Endothelial cell of umbilical vein (primary cell): ENCODE measurements at regions of chr10 and their contacts with region 1.

Region 1: DNA sequence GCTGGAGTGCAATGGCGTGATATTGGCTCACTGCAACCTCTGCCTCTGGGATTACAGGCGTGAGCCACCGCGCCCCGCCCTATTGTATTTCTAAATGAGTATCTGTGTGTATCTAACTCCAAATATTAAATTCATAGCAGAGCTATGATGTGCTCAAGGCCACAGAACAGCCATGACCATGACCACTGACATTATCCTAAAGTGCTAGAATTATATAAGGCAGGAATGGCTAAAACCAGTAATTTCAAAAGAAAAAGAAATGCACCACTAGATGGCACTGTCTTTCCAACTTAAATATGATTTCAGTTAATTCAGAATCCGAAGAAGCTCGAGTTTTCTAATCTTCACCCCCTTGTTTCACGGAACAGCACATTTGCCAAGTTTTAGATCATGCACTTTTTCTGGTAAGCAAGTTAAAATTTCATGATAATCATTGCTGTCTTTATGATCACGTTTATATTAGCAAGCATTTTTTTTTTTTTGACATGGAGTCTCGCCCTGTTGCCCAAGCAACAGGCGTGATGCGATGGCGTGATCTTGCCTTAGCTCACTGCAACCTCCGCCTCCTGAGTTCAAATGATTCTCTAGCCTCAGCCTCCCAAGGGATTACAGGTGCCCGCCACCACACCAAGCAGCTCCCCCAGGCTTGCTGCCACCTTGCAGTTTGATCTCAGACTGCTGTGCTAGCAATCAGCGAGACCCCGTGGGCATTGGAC is 65.3 kb downstream of the OR13A1 start:
- DNase-seq: peak; percentile 71
- H3K4me3 ChIP-seq: peak overlapping the region in 2 of 3 experiments; percentile 21 to 58
- H3K27ac ChIP-seq: peak overlapping the region; percentile 23
- H3K4me1 ChIP-seq: no peaks in the 10 kb centered on the region
- H3K27me3 ChIP-seq: peaks cover 0 to 3% of the 10 kb centered on the region in 2 experiments
- CTCF ChIP-seq: peak; percentile 11 to 28
- POLR2A ChIP-seq: no peak

Region 2: DNA sequence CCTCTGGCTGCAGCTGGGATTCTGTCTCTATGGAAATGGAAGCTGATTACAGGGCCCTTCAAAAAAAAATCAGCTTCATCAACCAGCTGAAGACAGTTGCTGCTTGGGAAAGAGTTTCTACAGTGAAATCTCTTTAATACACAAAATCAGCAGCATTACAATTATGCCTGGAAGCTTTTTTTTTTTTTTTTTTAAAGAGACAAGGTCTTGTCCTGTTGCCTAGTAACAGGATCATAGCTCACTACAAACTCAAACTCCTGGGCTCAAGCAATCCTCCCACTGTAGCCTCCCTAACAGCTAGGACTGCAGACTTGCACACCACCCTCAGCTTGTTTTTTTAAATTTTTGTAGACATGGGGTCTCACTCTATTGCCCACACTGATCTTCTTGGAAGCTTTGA is 29.2 kb before region 1 on chr10:
- CTCF ChIA-PET with region 1: interaction called, 11 read pairs
- POLR2A ChIA-PET with region 1: no interaction called
- dilution Hi-C with region 1: no loop called
- intact Hi-C with region 1: no loop called
- DNase-seq: no peak
- H3K4me3 ChIP-seq: no peak overlapping the region
- H3K27ac ChIP-seq: no peak overlapping the region
- H3K4me1 ChIP-seq: no peaks in the 10 kb centered on the region
- H3K27me3 ChIP-seq: no peaks in the 10 kb centered on the region
- CTCF ChIP-seq: no peak
- POLR2A ChIP-seq: no peak

Region 3: GRCh38 chr10:45229823-45230222 is 20.3 kb before region 1 on chr10:
- CTCF ChIA-PET with region 1: interaction called, 70 read pairs
- POLR2A ChIA-PET with region 1: no interaction called
- dilution Hi-C with region 1: no loop called
- intact Hi-C with region 1: loop called (anchors 1 kb)
- DNase-seq: no peak
- H3K4me3 ChIP-seq: no peak overlapping the region
- H3K27ac ChIP-seq: no peak overlapping the region
- H3K4me1 ChIP-seq: no peaks in the 10 kb centered on the region
- H3K27me3 ChIP-seq: no peaks in the 10 kb centered on the region
- CTCF ChIP-seq: no peak
- POLR2A ChIP-seq: no peak

Region 4: GRCh38 chr10:45261946-45262345 is 11.8 kb after region 1 on chr10:
- CTCF ChIA-PET with region 1: interaction called, 11 read pairs
- POLR2A ChIA-PET with region 1: no interaction called
- dilution Hi-C with region 1: no loop called
- intact Hi-C with region 1: no loop called
- DNase-seq: no peak
- H3K4me3 ChIP-seq: no peak overlapping the region
- H3K27ac ChIP-seq: no peak overlapping the region
- H3K4me1 ChIP-seq: no peaks in the 10 kb centered on the region
- H3K27me3 ChIP-seq: peaks cover 5% of the 10 kb centered on the region in 2 experiments
- CTCF ChIP-seq: no peak
- POLR2A ChIP-seq: no peak

Region 5: DNA sequence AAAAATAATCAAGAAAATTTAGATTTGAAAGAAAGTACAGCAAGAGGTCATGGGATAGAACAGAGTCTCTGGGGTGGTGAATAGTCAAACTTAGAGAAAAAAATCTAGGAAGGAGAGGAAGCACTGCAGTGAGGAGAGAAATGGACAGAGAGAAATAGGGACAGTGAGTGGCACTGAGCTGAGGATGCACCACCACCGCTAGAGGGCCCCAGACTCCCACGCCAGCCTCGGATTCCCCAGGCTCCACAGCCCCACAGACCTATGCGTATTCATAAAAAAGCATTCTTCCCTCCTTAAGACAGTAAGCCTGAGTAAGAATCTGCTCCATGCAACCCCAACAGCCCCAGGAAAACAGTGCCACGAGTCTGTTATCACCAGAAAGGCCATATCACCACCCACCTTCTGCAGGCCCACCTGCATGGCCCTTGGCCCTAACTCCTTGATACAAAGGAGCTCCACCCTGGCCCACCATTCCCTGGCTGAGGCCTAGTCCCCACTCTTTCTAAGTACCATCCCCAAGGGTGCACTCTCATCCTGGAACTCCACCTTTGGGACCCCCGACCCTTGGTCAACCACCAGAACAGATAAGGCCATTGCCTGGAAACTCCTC is 214.9 kb after region 1 on chr10:
- CTCF ChIA-PET with region 1: interaction called, 24 read pairs
- POLR2A ChIA-PET with region 1: no interaction called
- dilution Hi-C with region 1: no loop called
- intact Hi-C with region 1: loop called (anchors 1 kb)
- DNase-seq: peak; percentile 67
- H3K4me3 ChIP-seq: no peak overlapping the region
- H3K27ac ChIP-seq: no peak overlapping the region
- H3K4me1 ChIP-seq: peaks cover 3% of the 10 kb centered on the region
- H3K27me3 ChIP-seq: no peaks in the 10 kb centered on the region
- CTCF ChIP-seq: peak; percentile 92 to 98
- POLR2A ChIP-seq: no peak

Region 6: DNA sequence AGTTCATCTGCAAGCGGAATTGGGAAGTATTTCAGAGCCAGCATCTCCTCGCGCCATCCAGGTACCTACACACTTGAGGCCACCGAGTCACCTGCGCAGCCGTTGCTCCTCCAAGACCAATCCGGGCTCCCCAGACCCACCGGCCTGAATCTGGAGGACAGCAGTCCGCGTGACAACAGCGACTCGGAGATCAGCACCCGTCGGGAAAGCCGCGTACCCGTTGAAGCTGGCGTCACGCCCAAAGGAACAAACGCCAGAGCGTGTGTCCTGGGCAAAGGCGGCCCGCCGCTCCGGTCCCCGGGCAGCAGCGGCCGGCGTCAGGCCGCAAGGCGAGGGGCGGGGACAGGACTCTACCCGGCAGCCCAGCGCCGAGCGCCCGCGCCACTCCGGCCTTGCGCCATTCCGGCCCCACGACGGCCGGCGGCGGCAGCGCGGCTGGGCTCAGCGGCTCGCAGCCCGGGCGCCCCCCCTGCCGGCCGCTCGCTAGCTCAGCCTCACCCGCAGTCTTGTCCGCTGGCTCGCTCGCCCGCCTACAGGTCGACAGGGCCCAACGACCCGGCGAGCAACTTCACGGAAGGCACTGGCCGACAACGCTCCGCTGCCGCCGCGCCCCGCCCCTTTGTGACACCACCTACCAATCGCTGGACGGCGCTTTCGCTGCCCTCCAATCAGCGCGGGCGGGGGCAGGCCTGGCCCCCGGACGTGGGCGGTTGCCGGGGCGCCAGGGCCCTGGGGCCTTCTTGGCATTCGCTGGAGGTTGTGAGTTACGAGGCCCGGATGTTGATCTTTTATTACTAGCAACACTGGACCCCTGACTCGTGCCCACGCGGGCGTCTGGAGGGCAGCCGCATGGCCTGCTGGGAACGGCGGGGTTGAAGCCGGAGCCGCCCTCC is 422.3 kb after region 1 on chr10 and contains the start of gene ZFAND4:
- CTCF ChIA-PET with region 1: interaction called, 8 read pairs
- POLR2A ChIA-PET with region 1: no interaction called
- dilution Hi-C with region 1: no loop called
- intact Hi-C with region 1: loop called (anchors 1 kb)
- DNase-seq: peak; percentile 97
- H3K4me3 ChIP-seq: peak within 1 kb of the TSS; percentile 33 to 78 (median 59)
- H3K27ac ChIP-seq: peak within 1 kb of the TSS; percentile 52
- H3K4me1 ChIP-seq: peaks cover 6% of the 10 kb centered on the region
- H3K27me3 ChIP-seq: no peaks in the 10 kb centered on the region
- CTCF ChIP-seq: peak; percentile 68 to 82
- POLR2A ChIP-seq: peak; percentile 55
- total RNA-seq, gene ZFAND4: 7.2 and 7.8 TPM in 2 replicates

Region 7: DNA sequence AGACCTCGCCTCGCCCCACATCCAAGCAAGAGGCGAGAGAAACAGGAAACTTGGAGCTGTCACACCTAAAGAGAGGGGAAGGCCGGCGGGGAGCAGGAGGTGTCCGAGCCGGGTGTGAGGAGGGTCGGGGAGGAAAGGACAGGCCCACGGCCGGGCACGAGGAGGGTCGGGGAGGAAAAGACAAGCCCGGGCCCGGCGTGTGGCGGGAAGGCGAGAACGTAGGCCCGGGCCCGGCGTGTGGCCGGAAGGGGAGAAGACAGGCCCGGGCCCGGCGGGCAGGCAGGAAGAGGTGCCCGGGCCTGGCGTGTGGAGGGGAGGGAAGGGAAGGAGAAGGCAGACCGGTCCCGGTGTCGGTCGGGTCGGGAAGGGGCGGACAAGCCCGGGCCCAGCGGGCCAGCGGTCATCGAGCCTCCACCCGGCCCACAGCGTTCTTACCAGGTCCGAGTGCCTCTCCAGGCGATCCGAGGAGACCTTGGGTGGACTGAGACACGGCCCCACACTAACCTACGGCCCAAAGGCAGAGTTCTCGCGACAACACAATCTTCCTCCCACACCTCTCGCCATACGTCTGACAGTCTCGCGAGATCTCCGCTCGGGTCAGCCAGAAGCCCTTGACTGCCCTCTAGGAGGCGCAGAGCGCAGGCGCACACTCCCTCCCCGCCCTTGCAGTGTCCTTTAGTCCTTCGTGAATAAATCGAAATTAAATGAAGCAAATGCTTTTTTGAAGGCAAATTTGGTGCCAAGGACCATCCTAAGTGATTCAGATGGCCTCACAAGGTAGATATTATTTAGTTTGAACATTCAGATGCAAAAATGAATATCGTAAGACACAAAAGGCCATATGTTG is 780.2 kb after region 1 on chr10 and contains the start of gene NCOA4:
- CTCF ChIA-PET with region 1: interaction called, 10 read pairs
- POLR2A ChIA-PET with region 1: no interaction called
- dilution Hi-C with region 1: no loop called
- intact Hi-C with region 1: no loop called
- DNase-seq: peak; percentile 98
- H3K4me3 ChIP-seq: peak within 1 kb of the TSS; percentile 75 to 94 (median 85)
- H3K27ac ChIP-seq: peak within 1 kb of the TSS; percentile 71
- H3K4me1 ChIP-seq: peaks cover 36% of the 10 kb centered on the region
- H3K27me3 ChIP-seq: no peaks in the 10 kb centered on the region
- CTCF ChIP-seq: peak; percentile 74 to 78
- POLR2A ChIP-seq: peak; percentile 97
- total RNA-seq, gene NCOA4: 119 and 127 TPM in 2 replicates